Gastrocnemius medialis (tissue), 4 donors: ENCODE measurements at regions of chr3 and their contacts with region 1.

Region 1: DNA sequence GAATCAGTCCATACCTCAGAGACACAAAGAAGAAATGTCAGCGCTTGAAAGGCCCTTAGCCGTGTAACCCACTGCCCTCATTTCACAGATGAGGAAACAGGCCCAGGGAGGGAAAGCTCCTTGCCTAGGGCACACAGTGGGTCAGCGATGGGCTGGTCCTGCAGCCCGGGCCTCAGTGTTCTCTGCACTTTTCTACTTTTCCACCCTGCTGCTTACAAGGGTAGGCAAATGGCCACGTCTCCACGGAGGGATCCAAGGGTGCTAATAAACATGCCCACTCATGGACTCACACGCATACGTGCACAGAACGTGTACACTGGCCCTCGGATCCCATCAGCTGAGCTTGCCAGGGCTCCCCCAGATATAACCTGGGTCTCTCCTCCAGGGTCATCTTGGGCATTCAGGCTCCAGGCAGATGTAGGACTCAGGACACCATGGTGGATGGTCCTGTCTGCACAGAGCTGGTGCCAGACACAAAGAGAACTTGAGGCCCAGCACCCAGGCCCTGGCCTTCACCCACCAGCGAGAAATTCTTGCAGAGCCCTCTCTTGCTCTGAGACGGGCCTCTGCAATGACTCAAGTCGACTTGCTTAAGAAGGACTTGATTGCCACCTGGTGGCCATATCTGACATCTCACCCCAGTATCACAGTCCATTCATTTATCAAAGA is 34.5 kb upstream of the VPS8 start:
- DNase-seq: peak; percentile 74 to 88
- ATAC-seq: peak; percentile 94 to 97
- H3K4me3 ChIP-seq: no peak overlapping the region
- H3K27ac ChIP-seq: no peak overlapping the region
- H3K4me1 ChIP-seq: no peaks in the 10 kb centered on the region
- H3K27me3 ChIP-seq: peaks cover 0 to 3% (median 0%) of the 10 kb centered on the region in 3 donors
- CTCF ChIP-seq: peak; percentile 83 to 92 (median 87)
- POLR2A ChIP-seq: no peak

Region 2: GRCh38 chr3:183884427-183885296 is 892.8 kb before region 1 on chr3 and contains the start of gene PARL:
- in situ Hi-C with region 1: loop called in 1 of 4 experiments (anchors 25 kb)
- intact Hi-C with region 1: no loop called
- DNase-seq: peak; percentile 93 to 94
- ATAC-seq: peak; percentile 98 to 99
- H3K4me3 ChIP-seq: peak within 1 kb of the TSS; percentile 83 to 96 (median 92)
- H3K27ac ChIP-seq: peak within 1 kb of the TSS; percentile 77 to 90 (median 88)
- H3K4me1 ChIP-seq: peaks cover 20 to 23% of the 10 kb centered on the region in 2 donors
- H3K27me3 ChIP-seq: no peaks in the 10 kb centered on the region
- CTCF ChIP-seq: peak; percentile 93 to 96 (median 96)
- POLR2A ChIP-seq: peak; percentile 43 to 72
- total RNA-seq, gene PARL: 30.5 to 49.5 (median 41.3) TPM

Region 3: DNA sequence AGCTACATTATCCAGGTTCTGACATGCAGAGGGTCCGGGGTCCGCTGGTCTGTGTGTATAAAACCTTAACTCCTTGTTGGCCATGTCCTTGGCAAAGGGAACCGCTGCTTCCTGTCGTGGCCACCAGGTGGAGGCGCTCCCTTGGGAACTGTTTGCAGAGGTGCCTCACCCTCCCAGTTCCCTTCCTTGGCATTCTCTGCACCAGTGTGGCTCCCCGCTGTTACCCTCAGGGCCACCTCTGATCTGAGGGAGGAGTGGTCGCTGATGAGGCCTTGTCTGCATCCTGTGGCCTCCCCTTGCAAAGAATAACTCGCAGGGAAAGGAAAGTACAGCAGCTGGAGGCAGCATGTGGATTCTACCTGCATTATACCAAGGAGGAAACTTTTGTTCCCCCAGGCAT is 308.0 kb before region 1 on chr3:
- in situ Hi-C with region 1: no loop called
- intact Hi-C with region 1: no loop called
- DNase-seq: no peak
- ATAC-seq: no peak
- H3K4me3 ChIP-seq: no peak overlapping the region
- H3K27ac ChIP-seq: no peak overlapping the region
- H3K4me1 ChIP-seq: peaks cover 0 to 6% of the 10 kb centered on the region in 2 donors
- H3K27me3 ChIP-seq: no peaks in the 10 kb centered on the region
- CTCF ChIP-seq: peak in 2 of 5 experiments; percentile 21 to 32
- POLR2A ChIP-seq: no peak

Region 4: DNA sequence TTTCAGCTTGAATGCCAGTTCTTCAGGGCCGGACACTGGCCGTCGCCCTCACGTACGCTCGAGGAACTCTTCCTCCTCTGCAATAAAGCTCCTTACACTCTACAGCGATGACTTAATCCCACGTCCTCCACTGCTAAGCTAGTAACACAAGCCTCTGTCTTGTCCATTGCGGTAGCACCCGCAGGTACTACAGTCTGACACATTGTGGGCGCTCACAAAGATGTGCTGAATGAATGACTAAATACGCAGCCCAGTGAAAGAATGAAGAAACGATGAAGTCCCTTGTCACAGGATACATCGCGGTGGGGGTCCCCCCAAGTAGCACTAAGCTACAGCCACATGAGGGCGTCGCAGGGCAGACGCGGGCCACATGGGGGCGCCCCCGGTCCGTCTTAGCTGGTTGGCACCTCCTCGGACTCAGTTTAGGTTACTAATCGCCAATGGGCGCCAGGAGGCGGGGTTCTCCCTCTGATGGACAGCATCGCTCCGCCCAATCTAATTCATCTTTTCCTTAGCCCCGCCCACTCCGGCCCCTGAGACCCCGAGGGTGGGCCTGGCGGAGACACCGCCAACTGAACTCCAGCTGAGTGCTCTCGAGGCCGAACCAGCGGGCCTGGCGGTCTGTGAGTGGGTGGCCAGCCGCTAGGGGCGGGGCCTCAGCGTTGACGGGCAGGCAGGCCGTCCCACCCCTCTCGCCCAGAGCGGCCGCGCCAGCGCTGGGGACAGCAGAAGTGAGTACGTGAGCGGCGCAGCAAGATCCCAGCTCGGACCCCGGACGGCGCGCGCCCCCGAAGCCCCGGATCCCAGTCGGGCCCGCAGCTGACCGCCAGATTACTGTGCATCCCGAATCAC is 216.2 kb before region 1 on chr3 and contains the start of gene EPHB3:
- in situ Hi-C with region 1: no loop called
- intact Hi-C with region 1: loop called (anchors 1 kb)
- DNase-seq: peak; percentile 94 to 98
- ATAC-seq: peak; percentile 93
- H3K4me3 ChIP-seq: peak within 1 kb of the TSS; percentile 47 to 77 (median 63)
- H3K27ac ChIP-seq: peak within 1 kb of the TSS in 3 of 4 donors; percentile 18 to 44 (median 28)
- H3K4me1 ChIP-seq: peaks cover 13 to 15% of the 10 kb centered on the region in 2 donors
- H3K27me3 ChIP-seq: peaks cover 0 to 7% (median 7%) of the 10 kb centered on the region in 3 donors
- CTCF ChIP-seq: peak; percentile 97 to 99 (median 98)
- POLR2A ChIP-seq: peak; percentile 60 to 89
- total RNA-seq, gene EPHB3: 0.10 to 0.24 (median 0.12) TPM

Region 5: DNA sequence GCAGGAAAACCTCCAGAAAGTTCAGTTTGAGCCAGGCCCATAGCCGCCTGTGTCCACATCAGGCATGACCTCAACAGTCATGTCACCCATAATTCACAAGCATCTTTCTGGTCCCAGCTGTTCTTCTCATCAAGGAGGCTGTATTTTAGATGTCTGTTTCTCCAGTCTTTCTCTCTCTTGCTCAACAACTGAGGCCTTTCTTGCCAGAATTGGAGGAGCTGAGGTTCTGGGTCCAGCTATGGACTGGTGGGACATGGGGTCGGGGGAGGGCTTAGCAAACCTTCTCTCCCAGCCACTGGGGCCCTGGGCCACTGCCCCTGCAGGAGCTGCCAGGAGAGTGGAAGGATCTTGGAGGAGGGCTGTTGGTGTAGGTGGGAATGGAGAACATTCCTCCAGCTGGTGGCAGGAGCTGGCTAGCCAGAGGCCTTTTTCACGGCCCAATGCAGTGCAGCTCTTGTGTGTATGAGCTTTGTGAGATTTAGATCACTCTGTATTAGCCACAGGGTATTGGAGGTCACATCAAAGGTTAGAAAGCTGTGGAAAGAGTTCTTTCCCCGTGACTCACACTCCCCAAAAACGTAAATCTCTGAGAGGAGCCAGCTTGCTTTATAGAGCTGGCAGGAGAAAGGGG is 89.1 kb before region 1 on chr3:
- in situ Hi-C with region 1: no loop called
- intact Hi-C with region 1: no loop called
- DNase-seq: peak in 1 of 2 donors; percentile 24
- ATAC-seq: peak; percentile 85 to 88
- H3K4me3 ChIP-seq: no peak overlapping the region
- H3K27ac ChIP-seq: peak overlapping the region; percentile 37 to 59 (median 48)
- H3K4me1 ChIP-seq: peaks cover 11 to 30% of the 10 kb centered on the region in 2 donors
- H3K27me3 ChIP-seq: no peaks in the 10 kb centered on the region
- CTCF ChIP-seq: no peak
- POLR2A ChIP-seq: no peak

Region 6: DNA sequence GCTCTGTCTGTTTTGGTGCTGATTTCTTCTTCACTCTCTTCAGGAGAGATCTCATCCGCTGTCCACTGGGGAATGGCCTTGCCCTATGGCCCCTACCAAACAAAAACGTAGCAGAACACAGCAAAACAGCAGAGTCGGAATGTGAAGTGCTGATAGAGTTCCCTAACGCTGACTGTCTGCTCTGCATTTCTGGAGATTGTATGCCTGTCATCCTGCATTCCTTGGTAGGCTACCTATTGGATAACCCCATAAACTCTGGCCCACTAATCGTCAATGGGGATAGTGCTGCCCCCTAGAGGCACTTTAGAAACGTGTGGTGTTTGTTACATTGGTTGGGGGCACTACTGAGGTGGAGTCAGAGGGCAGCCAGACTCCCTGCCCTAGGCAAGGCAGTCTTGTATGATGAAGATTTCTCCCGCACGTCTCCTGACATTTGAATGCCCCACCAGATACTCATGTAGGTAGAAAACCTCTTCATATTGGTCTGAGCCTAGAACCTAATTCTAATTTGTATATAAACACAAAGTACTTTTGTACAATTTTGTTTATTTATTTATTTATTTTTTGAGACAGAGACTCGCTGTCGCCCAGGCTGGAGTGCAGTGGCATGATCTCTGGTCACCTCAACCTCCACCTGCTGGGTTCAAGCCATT is 50.0 kb before region 1 on chr3:
- in situ Hi-C with region 1: no loop called
- intact Hi-C with region 1: loop called (anchors 5 kb)
- DNase-seq: peak in 1 of 2 donors; percentile 45
- ATAC-seq: peak; percentile 88 to 92
- H3K4me3 ChIP-seq: no peak overlapping the region
- H3K27ac ChIP-seq: no peak overlapping the region
- H3K4me1 ChIP-seq: no peaks in the 10 kb centered on the region
- H3K27me3 ChIP-seq: no peaks in the 10 kb centered on the region
- CTCF ChIP-seq: peak; percentile 37 to 71 (median 61)
- POLR2A ChIP-seq: no peak